Calu3 (cell line): ENCODE measurements at regions of chr6 and their contacts with region 1.

Region 1: DNA sequence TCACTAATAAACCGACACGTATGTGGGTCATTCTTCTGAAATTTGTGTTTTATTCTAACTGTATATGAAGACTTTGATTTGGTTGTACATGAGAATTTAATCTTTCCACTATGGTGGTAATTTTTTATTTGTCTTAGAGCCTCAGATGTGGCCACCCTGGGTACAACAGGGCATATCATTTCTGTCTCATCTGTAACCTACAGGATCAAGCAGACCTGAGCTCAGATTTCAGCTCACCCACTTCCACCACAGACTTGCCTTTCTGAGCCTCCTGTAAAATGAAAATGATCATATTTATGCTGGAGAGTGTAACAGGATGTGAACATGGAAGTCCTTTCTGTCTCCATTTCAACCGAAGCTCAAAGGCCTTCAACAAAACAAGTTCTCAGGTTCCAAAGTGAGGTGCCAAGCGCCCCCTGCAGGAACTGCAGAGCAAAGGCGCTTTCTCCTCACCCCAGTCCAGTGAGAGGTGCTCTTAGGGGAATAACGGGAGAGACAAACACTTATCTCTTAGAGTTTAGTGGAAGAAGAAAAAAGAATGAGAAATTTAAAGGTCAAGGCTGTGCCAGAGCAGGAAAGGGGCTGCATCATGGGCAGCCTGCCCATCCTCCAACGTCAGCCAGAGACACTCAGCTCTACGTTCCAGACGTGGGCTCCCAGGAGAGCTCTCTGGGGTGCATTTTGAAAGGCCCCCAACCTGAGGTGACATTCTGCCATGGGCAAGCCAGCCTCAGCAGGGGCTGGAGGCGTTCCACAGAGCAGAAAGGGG is 23.0 kb upstream of the CD24 start:
- DNase-seq: peak; percentile 80
- H3K4me3 Mint-ChIP-seq: no peak overlapping the region
- H3K27ac Mint-ChIP-seq: no peak overlapping the region
- H3K4me1 Mint-ChIP-seq: peaks cover 11% of the 10 kb centered on the region
- H3K27me3 Mint-ChIP-seq: no peaks in the 10 kb centered on the region
- CTCF ChIP-seq: peak; percentile 88

Region 2: GRCh38 chr6:106339334-106340029 is 658.1 kb before region 1 on chr6:
- CTCF ChIA-PET with region 1: interaction called, 7 read pairs
- intact Hi-C with region 1: loop called (anchors 1 kb)
- DNase-seq: peak; percentile 70
- H3K4me3 Mint-ChIP-seq: peak overlapping the region; percentile 44
- H3K27ac Mint-ChIP-seq: peak overlapping the region; percentile 60
- H3K4me1 Mint-ChIP-seq: peaks cover 12% of the 10 kb centered on the region
- H3K27me3 Mint-ChIP-seq: no peaks in the 10 kb centered on the region
- CTCF ChIP-seq: peak; percentile 75

Region 3: DNA sequence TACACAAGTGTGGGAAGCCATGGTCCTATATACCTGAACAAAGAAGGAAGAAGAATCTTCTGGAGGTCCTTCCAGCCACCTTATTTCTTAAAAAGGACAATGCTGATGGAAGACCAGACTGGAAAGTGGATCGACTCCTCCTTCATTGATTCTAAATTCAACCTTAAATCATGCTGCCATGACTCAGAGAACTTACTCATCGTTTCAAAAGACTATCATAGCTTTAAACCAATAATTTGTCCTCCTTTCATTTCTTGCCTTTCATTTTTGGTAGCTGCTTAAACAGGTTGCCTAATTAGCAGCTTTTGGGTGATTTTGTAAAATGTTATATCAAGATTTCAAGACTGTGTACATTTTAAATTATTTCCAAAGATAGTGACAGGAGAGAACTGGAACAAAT is 429.0 kb before region 1 on chr6:
- CTCF ChIA-PET with region 1: interaction called, 11 read pairs
- intact Hi-C with region 1: loop called (anchors 5 kb)
- DNase-seq: no peak
- H3K4me3 Mint-ChIP-seq: no peak overlapping the region
- H3K27ac Mint-ChIP-seq: no peak overlapping the region
- H3K4me1 Mint-ChIP-seq: no peaks in the 10 kb centered on the region
- H3K27me3 Mint-ChIP-seq: no peaks in the 10 kb centered on the region
- CTCF ChIP-seq: no peak

Region 4: DNA sequence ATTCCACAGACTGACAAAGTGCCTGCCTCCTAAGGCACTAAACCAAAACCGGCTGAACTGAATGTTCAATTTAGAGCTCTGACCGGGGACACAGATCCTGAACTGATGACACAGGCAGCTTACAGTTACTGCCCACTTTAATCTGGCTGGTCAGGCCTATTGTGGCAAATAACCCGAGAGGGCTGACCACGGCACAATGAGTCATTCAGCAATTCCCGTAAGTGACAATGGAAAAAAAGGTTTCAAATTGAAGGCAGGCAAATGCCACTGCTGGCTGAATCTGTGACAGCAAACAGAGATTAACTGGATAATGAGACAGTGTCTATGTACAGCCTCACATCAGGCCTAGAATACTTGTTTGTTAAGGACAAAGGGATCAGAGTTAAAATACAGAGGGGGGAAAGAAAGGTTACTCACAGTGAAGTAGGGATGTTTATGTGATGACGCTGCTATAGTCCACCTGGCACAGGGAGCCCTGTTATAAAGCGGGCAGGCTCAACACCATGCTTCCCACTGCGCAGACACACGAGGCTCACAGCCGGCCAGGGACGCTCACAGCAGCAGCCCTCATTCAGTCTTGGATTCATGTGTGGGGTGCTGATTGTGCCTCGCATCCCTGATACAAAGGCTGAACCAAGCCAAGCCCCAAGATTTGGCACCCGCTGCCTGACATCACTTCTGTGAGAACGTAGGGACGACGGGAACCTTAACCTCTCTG is 422.7 kb before region 1 on chr6:
- CTCF ChIA-PET with region 1: no interaction called
- intact Hi-C with region 1: loop called (anchors 5 kb)
- DNase-seq: peak; percentile 38
- H3K4me3 Mint-ChIP-seq: no peak overlapping the region
- H3K27ac Mint-ChIP-seq: no peak overlapping the region
- H3K4me1 Mint-ChIP-seq: peaks cover 10% of the 10 kb centered on the region
- H3K27me3 Mint-ChIP-seq: no peaks in the 10 kb centered on the region
- CTCF ChIP-seq: no peak

Region 5: GRCh38 chr6:106959985-106960384 is 37.6 kb before region 1 on chr6:
- CTCF ChIA-PET with region 1: no interaction called
- intact Hi-C with region 1: no loop called
- DNase-seq: no peak
- H3K4me3 Mint-ChIP-seq: no peak overlapping the region
- H3K27ac Mint-ChIP-seq: no peak overlapping the region
- H3K4me1 Mint-ChIP-seq: peaks cover 13% of the 10 kb centered on the region
- H3K27me3 Mint-ChIP-seq: no peaks in the 10 kb centered on the region
- CTCF ChIP-seq: no peak